Spleen (tissue), 13 donors: ENCODE measurements at regions of chr2 and their contacts with region 1.

Region 1: GRCh38 chr2:42878581-42878980 is 86.2 kb upstream of the HAAO start:
- DNase-seq: no peak
- H3K4me3 ChIP-seq: no peak overlapping the region
- H3K27ac ChIP-seq: peak overlapping the region; percentile 35 to 91 (median 76)
- H3K4me1 ChIP-seq: peaks cover 6 to 75% (median 45%) of the 10 kb centered on the region in 6 donors
- H3K27me3 ChIP-seq: no peaks in the 10 kb centered on the region
- CTCF ChIP-seq: no peak
- POLR2A ChIP-seq: no peak

Region 2: GRCh38 chr2:42545821-42546390 is 332.7 kb before region 1 on chr2:
- intact Hi-C with region 1: no loop called
- DNase-seq: no peak
- H3K4me3 ChIP-seq: no peak overlapping the region
- H3K27ac ChIP-seq: no peak overlapping the region
- H3K4me1 ChIP-seq: peaks cover 0 to 6% (median 0%) of the 10 kb centered on the region in 6 donors
- H3K27me3 ChIP-seq: no peaks in the 10 kb centered on the region
- CTCF ChIP-seq: no peak
- POLR2A ChIP-seq: no peak

Region 3: DNA sequence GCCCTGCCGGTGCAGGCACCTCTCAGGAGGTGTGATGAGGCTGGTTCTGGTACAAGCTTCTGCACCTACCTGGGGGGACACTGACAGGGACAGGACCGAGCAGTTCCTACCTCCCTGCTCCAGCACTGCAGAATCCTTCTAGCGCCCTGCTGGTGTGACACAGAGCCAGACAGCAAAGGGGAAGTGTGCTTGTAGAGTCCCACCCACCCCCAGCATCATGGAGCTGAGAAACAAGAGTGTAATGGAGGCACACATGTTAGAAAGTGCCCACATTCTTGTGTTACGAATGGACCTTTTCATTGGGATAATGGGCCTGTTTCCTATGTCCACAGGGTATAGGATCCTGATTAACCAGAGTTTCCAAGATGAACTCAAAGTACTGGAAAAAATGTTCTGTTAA is 152.9 kb before region 1 on chr2:
- intact Hi-C with region 1: no loop called
- DNase-seq: no peak
- H3K4me3 ChIP-seq: no peak overlapping the region
- H3K27ac ChIP-seq: no peak overlapping the region
- H3K4me1 ChIP-seq: peaks cover 0 to 19% (median 0%) of the 10 kb centered on the region in 6 donors
- H3K27me3 ChIP-seq: no peaks in the 10 kb centered on the region
- CTCF ChIP-seq: no peak
- POLR2A ChIP-seq: no peak

Region 4: GRCh38 chr2:42828487-42829425 is 49.8 kb before region 1 on chr2:
- intact Hi-C with region 1: no loop called
- DNase-seq: peak; percentile 93
- H3K4me3 ChIP-seq: no peak overlapping the region
- H3K27ac ChIP-seq: no peak overlapping the region
- H3K4me1 ChIP-seq: peaks cover 7 to 26% (median 17%) of the 10 kb centered on the region in 6 donors
- H3K27me3 ChIP-seq: no peaks in the 10 kb centered on the region
- CTCF ChIP-seq: peak; percentile 80 to 97 (median 90)
- POLR2A ChIP-seq: no peak

Region 5: DNA sequence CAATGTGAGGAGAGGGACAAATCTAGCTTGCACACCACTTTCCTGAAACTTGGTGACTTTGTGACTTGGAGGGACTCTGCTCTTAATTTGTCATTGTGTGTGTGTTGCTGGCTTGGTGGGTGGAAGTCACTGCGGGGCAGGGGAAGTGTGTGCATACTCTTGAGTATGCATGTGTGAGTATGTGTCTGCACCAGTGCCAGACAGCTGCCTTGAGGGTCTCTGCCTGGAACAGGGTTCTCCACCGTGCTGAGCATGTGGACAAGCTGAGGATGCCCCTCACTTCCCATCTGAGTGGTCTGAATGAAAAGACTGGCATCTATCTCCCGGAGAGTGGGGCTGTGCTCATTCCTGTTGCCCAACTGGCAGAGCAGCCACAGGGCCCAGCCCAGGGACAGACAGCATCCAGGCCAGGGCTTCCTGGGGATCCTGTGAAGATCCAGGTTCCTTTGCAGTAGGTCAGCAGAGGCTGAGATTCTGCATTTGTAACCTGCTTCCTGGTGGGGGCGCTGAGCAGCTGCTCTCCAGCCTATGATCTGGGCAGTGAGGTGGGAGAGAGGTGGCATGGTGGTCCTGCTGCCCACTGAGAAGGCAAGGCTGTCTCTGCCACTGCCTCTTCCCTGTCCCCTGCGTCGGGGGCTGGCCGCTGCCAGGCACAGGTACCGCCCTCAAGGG is 52.7 kb after region 1 on chr2:
- intact Hi-C with region 1: loop called (anchors 10 kb)
- DNase-seq: no peak
- H3K4me3 ChIP-seq: no peak overlapping the region
- H3K27ac ChIP-seq: peak overlapping the region in 4 of 8 donors; percentile 22 to 82 (median 46)
- H3K4me1 ChIP-seq: peaks cover 14 to 89% (median 51%) of the 10 kb centered on the region in 6 donors
- H3K27me3 ChIP-seq: no peaks in the 10 kb centered on the region
- CTCF ChIP-seq: no peak
- POLR2A ChIP-seq: no peak

Region 6: GRCh38 chr2:43592443-43592842 is 713.9 kb after region 1 on chr2:
- intact Hi-C with region 1: no loop called
- DNase-seq: no peak
- H3K4me3 ChIP-seq: no peak overlapping the region
- H3K27ac ChIP-seq: no peak overlapping the region
- H3K4me1 ChIP-seq: peaks cover 7 to 36% (median 23%) of the 10 kb centered on the region in 6 donors
- H3K27me3 ChIP-seq: no peaks in the 10 kb centered on the region
- CTCF ChIP-seq: no peak
- POLR2A ChIP-seq: no peak